GM12878 (cell line): ENCODE measurements at regions of chr9 and their contacts with region 1.

Region 1: GRCh38 chr9:116910201-116910600 is 223.1 kb downstream of the TRIM32 start:
- DNase-seq: no peak
- ATAC-seq: peak; percentile 57
- H3K4me3 ChIP-seq: no peak overlapping the region
- H3K27ac ChIP-seq: no peak overlapping the region
- H3K4me1 ChIP-seq: no peaks in the 10 kb centered on the region
- H3K27me3 ChIP-seq: no peaks in the 10 kb centered on the region
- CTCF ChIP-seq: peak; percentile 9 to 28 (median 25); a peak in 2 of 6 replicates
- EP300 ChIP-seq: no peak
- POLR2A ChIP-seq: no peak
- RAD21 ChIP-seq: peak; percentile 60

Region 2: GRCh38 chr9:116979456-116979855 is 69.3 kb after region 1 on chr9:
- CTCF ChIA-PET with region 1: no interaction called
- POLR2A ChIA-PET with region 1: no interaction called
- RAD21 ChIA-PET with region 1: no interaction called
- SMC1A ChIA-PET with region 1: no interaction called
- in situ Hi-C with region 1: no loop called
- intact Hi-C with region 1: loop called (anchors 5 kb)
- DNase-seq: no peak
- ATAC-seq: no peak
- H3K4me3 ChIP-seq: no peak overlapping the region
- H3K27ac ChIP-seq: no peak overlapping the region
- H3K4me1 ChIP-seq: no peaks in the 10 kb centered on the region; the same call in 1 of the 2 replicates
- H3K27me3 ChIP-seq: no peaks in the 10 kb centered on the region; a peak in 2 of 4 replicates
- CTCF ChIP-seq: no peak
- EP300 ChIP-seq: no peak
- POLR2A ChIP-seq: no peak
- RAD21 ChIP-seq: no peak